IMR-90 (cell line): ENCODE measurements at regions of chr3 and their contacts with region 1.

Region 1: DNA sequence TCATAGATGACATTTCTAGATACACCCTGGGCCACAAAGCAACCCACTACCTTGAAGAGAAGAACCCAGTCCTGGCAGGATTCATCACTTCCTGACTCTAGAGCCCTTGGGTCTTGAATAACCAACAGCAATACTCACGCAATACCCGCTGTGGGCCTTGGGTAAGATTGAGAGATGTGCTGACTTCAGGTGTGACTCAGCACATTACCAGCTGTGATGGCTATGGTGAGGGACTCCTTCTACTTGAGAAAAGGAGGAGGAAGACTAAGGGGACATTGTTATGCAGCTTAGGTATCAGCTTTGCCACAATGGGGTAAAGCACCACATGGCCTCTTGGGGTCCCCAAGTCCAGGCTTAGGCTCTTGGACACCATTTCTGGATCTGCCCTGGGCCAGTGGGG is 14.9 kb downstream of the C3orf33 start:
- DNase-seq: peak; percentile 30
- ATAC-seq: no peak
- H3K4me3 ChIP-seq: no peak overlapping the region
- H3K27ac ChIP-seq: no peak overlapping the region
- H3K4me1 ChIP-seq: no peaks in the 10 kb centered on the region
- H3K27me3 ChIP-seq: no peaks in the 10 kb centered on the region
- CTCF ChIP-seq: no peak
- POLR2A ChIP-seq: no peak
- RAD21 ChIP-seq: no peak

Region 2: DNA sequence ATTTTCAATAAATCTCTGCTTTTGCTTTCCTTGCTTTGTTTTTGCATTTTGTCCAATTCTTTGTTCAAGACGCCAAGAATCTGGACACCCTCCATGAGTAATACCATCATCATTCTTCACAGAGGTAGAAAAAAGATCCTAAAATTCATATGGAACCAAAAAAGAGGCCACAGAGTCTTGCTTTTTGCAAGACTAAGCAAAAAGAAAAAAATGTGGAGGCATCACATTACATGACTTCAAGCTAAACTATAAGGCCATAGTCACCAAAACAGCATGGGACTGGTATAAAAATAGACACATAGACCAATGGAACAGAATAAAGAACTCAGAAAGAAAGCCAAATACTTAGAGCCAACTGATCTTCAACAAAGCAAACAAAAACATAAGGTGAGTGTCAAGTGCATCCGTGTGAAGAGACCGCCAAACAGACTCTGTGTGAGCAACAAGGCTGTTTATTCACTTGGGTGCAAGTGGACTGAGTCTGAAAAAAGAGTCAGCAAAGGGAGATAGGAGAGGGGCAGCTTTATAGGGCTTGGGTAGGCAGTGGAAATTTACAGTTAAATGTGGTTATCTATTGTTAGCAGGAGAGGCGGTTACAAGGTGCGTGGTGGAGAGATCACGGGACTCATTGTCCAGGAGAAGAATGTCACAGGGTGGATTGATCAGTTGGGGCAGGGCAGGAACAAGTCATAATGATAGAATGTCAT is 508.7 kb before region 1 on chr3:
- CTCF ChIA-PET with region 1: no interaction called
- POLR2A ChIA-PET with region 1: no interaction called
- dilution Hi-C with region 1: no loop called
- in situ Hi-C with region 1: no loop called
- intact Hi-C with region 1: no loop called
- DNase-seq: peak; percentile 74
- ATAC-seq: peak; percentile 82
- H3K4me3 ChIP-seq: no peak overlapping the region
- H3K27ac ChIP-seq: 0 out of 2 replicates have a peak overlapping the region, but pooled peaks have one; percentile 3
- H3K4me1 ChIP-seq: peaks cover 6% of the 10 kb centered on the region
- H3K27me3 ChIP-seq: no peaks in the 10 kb centered on the region
- CTCF ChIP-seq: no peak
- POLR2A ChIP-seq: no peak
- RAD21 ChIP-seq: no peak

Region 3: DNA sequence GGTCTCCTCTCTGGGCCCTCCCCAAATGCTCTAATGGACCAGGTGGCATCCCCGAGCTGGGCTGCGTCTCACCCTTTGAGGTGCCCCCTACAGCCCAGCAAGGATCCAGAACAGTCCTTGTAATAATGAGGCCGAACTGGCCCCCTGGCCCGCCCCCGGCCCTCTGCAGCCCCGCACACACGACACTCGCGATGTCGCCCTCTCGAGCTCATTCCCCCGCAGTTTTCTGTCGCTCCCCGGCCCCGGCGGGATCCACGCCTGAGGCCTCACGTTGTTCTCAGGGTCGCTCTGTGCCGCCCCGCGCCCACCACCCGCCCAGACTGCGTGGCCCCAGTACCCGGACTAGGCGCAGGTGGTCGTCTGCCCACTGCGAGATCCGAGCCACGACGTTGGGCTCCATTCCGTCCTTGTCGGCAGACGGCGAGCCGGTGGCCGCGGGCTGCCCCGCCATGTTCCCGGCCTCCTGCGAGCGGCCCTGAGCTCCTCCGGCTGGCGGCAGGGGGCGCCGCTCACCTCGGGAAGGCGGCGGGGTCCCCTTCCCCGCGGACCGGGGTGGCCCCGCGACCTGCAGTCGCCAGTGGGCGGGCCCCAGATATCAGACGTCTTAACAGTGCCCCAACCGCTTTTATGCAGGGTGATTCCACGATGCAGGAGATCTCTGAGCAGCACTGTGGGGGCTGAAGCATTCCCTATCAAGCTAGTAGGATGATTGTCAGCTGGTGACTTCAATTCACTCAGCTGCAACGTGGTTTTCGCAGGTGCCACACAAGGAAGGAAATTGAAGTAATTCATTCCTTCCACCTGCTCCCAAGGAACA is 14.8 kb after region 1 on chr3 and contains the start of gene C3orf33:
- CTCF ChIA-PET with region 1: interaction called, 10 read pairs
- POLR2A ChIA-PET with region 1: no interaction called
- dilution Hi-C with region 1: no loop called
- in situ Hi-C with region 1: no loop called
- intact Hi-C with region 1: no loop called
- DNase-seq: peak; percentile 37
- ATAC-seq: peak; percentile 99
- H3K4me3 ChIP-seq: peak within 1 kb of the TSS; percentile 69
- H3K27ac ChIP-seq: peak within 1 kb of the TSS; percentile 79
- H3K4me1 ChIP-seq: no peaks in the 10 kb centered on the region
- H3K27me3 ChIP-seq: no peaks in the 10 kb centered on the region
- CTCF ChIP-seq: peak; percentile 77
- POLR2A ChIP-seq: peak; percentile 33; the same call in 1 of the 2 replicates
- RAD21 ChIP-seq: peak; percentile 65
- total RNA-seq, gene C3orf33: 0.72 and 1.1 TPM in 2 replicates